ENCODE measurements at regions of chr16 and their contacts with region 1.

Region 1: DNA sequence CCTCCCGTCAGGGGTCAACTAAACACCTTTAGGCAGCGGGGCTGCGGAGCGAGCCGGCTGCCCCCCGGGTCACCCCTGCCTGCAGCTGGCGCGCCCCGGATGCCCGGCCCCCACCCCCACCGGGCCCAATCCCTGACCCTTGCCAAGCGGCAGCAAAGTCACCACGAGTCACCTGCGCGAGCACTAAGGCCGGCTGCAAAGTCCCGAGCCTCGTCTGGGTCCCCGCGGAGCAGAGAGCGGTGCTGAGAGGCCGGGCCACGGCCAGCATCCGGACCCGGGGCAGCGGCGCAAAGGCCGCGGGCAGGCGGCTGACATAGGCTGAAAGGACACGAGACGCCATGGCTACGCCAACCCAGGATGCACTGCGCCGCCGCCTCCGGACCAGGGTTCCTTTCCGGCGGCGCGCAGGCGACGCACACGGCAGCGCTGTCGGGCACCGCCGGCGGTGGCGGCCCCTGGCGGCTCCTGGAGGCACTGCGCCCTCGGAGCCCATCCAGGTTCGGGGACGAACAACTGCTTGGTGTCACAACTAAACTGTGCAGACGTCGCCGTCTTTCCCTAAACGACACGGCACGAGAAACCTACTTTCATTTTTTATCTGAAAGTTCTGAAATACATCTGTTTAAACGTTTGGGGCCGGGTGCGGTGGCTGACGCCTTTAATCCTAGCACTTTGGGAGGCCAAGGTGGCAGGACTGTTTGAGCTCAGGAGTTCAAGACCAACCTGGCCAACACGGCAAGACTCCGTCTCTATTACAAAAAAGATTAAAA is at the start of gene NDUFAB1:
- DNase-seq: peak; percentile 91
- H3K4me3 Mint-ChIP-seq: peak within 1 kb of the TSS; percentile 82
- H3K27ac Mint-ChIP-seq: peak within 1 kb of the TSS; percentile 83
- H3K4me1 Mint-ChIP-seq: peaks cover 30% of the 10 kb centered on the region
- H3K27me3 Mint-ChIP-seq: no peaks in the 10 kb centered on the region
- total RNA-seq, gene NDUFAB1: 57.8 to 82.6 TPM

Region 2: GRCh38 chr16:23608194-23608593 is 12.1 kb after region 1 on chr16:
- CTCF ChIA-PET with region 1: interaction called, 10 read pairs
- POLR2A ChIA-PET with region 1: interaction called, 3 read pairs
- DNase-seq: no peak
- H3K4me3 Mint-ChIP-seq: no peak overlapping the region
- H3K27ac Mint-ChIP-seq: peak overlapping the region; percentile 25
- H3K4me1 Mint-ChIP-seq: no peaks in the 10 kb centered on the region
- H3K27me3 Mint-ChIP-seq: no peaks in the 10 kb centered on the region

Measured in activated CD4-positive, alpha-beta T cell treated with anti-CD3 and anti-CD28 coated beads, Interleukin-2, amount 10 ng/mL, durations not matched to agents 7 days and 5 days (primary cell).